Heart right ventricle (tissue), 16 donors: ENCODE measurements at regions of chr7 and their contacts with region 1.

Region 1: GRCh38 chr7:113487925-113488731 is 369.8 kb upstream of the SMIM30 start:
- DNase-seq: no peak
- ATAC-seq: peak in 1 of 8 donors; percentile 67
- H3K4me3 ChIP-seq: no peak overlapping the region
- H3K27ac ChIP-seq: no peak overlapping the region
- H3K4me1 ChIP-seq: no peaks in the 10 kb centered on the region
- H3K27me3 ChIP-seq: no peaks in the 10 kb centered on the region
- CTCF ChIP-seq: no peak

Region 2: DNA sequence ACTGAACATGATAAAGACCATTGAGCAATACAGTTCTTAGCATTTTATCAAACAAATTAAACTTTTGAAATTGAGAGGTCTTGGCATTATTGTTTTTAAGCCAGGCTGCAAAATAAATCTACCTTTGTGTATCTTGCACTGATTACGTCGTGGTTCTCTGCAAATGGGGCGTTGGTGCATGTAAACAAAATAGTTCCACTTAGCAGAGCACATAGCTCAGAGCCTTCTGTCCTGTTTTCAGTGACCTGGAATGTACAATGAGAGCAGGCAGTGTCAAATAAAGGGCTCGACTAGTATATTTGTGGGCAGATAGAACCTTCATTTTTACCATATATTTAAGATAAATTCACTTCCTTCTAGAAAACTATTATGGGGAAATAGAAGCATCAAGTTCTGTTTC is 35.9 kb before region 1 on chr7:
- intact Hi-C with region 1: no loop called
- DNase-seq: no peak
- ATAC-seq: no peak
- H3K4me3 ChIP-seq: no peak overlapping the region
- H3K27ac ChIP-seq: no peak overlapping the region
- H3K4me1 ChIP-seq: no peaks in the 10 kb centered on the region
- H3K27me3 ChIP-seq: no peaks in the 10 kb centered on the region
- CTCF ChIP-seq: no peak

Region 3: GRCh38 chr7:113504142-113504541 is 16.0 kb after region 1 on chr7:
- intact Hi-C with region 1: loop called in 1 of 10 experiments (anchors 1 kb)
- DNase-seq: no peak
- ATAC-seq: peak in 4 of 8 donors; percentile 33 to 77 (median 63)
- H3K4me3 ChIP-seq: no peak overlapping the region
- H3K27ac ChIP-seq: peak overlapping the region in 3 of 10 donors; percentile 35 to 61 (median 45)
- H3K4me1 ChIP-seq: peaks cover 0 to 5% (median 0%) of the 10 kb centered on the region in 9 donors
- H3K27me3 ChIP-seq: no peaks in the 10 kb centered on the region
- CTCF ChIP-seq: no peak